Activated CD4-positive, alpha-beta T cell treated with anti-CD3 and anti-CD28 coated beads, Interleukin-2, amount 10 ng/mL, durations not matched to agents 24 days and 14 days (primary cell): ENCODE measurements at regions of chr7 and their contacts with region 1.

Region 1: GRCh38 chr7:5494683-5495561 is 71.3 kb upstream of the TNRC18 start:
- DNase-seq: peak; percentile 94
- H3K4me3 Mint-ChIP-seq: peak overlapping the region; percentile 21
- H3K27ac Mint-ChIP-seq: no peak overlapping the region
- H3K4me1 Mint-ChIP-seq: peaks cover 15% of the 10 kb centered on the region
- H3K27me3 Mint-ChIP-seq: no peaks in the 10 kb centered on the region

Region 2: GRCh38 chr7:5559576-5559975 is 64.7 kb after region 1 on chr7:
- intact Hi-C with region 1: loop called (anchors 1 kb)
- DNase-seq: no peak
- H3K4me3 Mint-ChIP-seq: no peak overlapping the region
- H3K27ac Mint-ChIP-seq: no peak overlapping the region
- H3K4me1 Mint-ChIP-seq: peaks cover 45% of the 10 kb centered on the region
- H3K27me3 Mint-ChIP-seq: peaks cover 18% of the 10 kb centered on the region

Region 3: GRCh38 chr7:5665094-5666025 is 170.4 kb after region 1 on chr7:
- intact Hi-C with region 1: loop called (anchors 1 kb)
- DNase-seq: peak; percentile 91
- H3K4me3 Mint-ChIP-seq: no peak overlapping the region
- H3K27ac Mint-ChIP-seq: no peak overlapping the region
- H3K4me1 Mint-ChIP-seq: peaks cover 25% of the 10 kb centered on the region
- H3K27me3 Mint-ChIP-seq: no peaks in the 10 kb centered on the region

Region 4: DNA sequence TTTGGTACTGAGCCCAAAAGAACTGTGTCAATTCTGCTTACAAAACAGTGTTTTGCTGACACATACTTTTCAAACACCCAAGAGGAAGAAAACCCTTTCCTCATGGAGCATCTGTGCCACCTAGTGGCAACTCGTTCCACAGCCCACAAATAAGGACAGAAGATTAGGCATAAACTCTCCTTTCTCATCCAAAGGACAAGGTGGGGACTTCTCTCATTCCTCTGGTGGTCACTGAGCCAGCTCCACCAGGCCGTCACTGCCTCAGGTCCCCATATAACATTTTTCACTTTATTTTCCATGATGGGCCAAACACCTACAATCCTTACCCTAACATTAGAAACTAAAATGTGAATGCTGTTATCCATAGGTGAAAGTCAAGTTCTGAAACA is 209.6 kb after region 1 on chr7:
- intact Hi-C with region 1: loop called (anchors 1 kb)
- DNase-seq: peak; percentile 93
- H3K4me3 Mint-ChIP-seq: no peak overlapping the region
- H3K27ac Mint-ChIP-seq: no peak overlapping the region
- H3K4me1 Mint-ChIP-seq: peaks cover 52% of the 10 kb centered on the region
- H3K27me3 Mint-ChIP-seq: no peaks in the 10 kb centered on the region

Region 5: GRCh38 chr7:6558837-6559236 is 1063.9 kb after region 1 on chr7:
- intact Hi-C with region 1: no loop called
- DNase-seq: peak; percentile 73
- H3K4me3 Mint-ChIP-seq: no peak overlapping the region
- H3K27ac Mint-ChIP-seq: no peak overlapping the region
- H3K4me1 Mint-ChIP-seq: peaks cover 6% of the 10 kb centered on the region
- H3K27me3 Mint-ChIP-seq: peaks cover 5% of the 10 kb centered on the region